Ascending aorta (tissue), 2 donors: ENCODE measurements at regions of chr1 and their contacts with region 1.

Region 1: GRCh38 chr1:248873409-248873992 is 14.6 kb upstream of the ZNF692 start:
- DNase-seq: peak; percentile 86 to 98
- H3K4me3 ChIP-seq: peak overlapping the region; percentile 70 to 79
- H3K27ac ChIP-seq: peak overlapping the region; percentile 97 to 99
- H3K4me1 ChIP-seq: no peaks in the 10 kb centered on the region
- H3K27me3 ChIP-seq: no peaks in the 10 kb centered on the region
- CTCF ChIP-seq: no peak

Region 2: GRCh38 chr1:247833601-247834000 is 1039.9 kb before region 1 on chr1:
- intact Hi-C with region 1: no loop called
- DNase-seq: no peak
- H3K4me3 ChIP-seq: no peak overlapping the region
- H3K27ac ChIP-seq: no peak overlapping the region
- H3K4me1 ChIP-seq: no peaks in the 10 kb centered on the region
- H3K27me3 ChIP-seq: no peaks in the 10 kb centered on the region
- CTCF ChIP-seq: no peak

Region 3: GRCh38 chr1:248670003-248670402 is 203.5 kb before region 1 on chr1:
- intact Hi-C with region 1: no loop called
- DNase-seq: no peak
- H3K4me3 ChIP-seq: no peak overlapping the region
- H3K27ac ChIP-seq: no peak overlapping the region
- H3K4me1 ChIP-seq: no peaks in the 10 kb centered on the region
- H3K27me3 ChIP-seq: no peaks in the 10 kb centered on the region
- CTCF ChIP-seq: no peak

Region 4: GRCh38 chr1:248825909-248826760 is 47.4 kb before region 1 on chr1 and contains the start of gene SH3BP5L:
- intact Hi-C with region 1: loop called (anchors 1 kb)
- DNase-seq: peak; percentile 68 to 95
- H3K4me3 ChIP-seq: peak within 1 kb of the TSS; percentile 80 to 90
- H3K27ac ChIP-seq: peak within 1 kb of the TSS; percentile 88 to 93
- H3K4me1 ChIP-seq: peaks cover 18 to 45% of the 10 kb centered on the region in 2 donors
- H3K27me3 ChIP-seq: no peaks in the 10 kb centered on the region
- CTCF ChIP-seq: peak; percentile 43 to 70 (median 57)
- total RNA-seq, gene SH3BP5L: 15.9 TPM

Region 5: DNA sequence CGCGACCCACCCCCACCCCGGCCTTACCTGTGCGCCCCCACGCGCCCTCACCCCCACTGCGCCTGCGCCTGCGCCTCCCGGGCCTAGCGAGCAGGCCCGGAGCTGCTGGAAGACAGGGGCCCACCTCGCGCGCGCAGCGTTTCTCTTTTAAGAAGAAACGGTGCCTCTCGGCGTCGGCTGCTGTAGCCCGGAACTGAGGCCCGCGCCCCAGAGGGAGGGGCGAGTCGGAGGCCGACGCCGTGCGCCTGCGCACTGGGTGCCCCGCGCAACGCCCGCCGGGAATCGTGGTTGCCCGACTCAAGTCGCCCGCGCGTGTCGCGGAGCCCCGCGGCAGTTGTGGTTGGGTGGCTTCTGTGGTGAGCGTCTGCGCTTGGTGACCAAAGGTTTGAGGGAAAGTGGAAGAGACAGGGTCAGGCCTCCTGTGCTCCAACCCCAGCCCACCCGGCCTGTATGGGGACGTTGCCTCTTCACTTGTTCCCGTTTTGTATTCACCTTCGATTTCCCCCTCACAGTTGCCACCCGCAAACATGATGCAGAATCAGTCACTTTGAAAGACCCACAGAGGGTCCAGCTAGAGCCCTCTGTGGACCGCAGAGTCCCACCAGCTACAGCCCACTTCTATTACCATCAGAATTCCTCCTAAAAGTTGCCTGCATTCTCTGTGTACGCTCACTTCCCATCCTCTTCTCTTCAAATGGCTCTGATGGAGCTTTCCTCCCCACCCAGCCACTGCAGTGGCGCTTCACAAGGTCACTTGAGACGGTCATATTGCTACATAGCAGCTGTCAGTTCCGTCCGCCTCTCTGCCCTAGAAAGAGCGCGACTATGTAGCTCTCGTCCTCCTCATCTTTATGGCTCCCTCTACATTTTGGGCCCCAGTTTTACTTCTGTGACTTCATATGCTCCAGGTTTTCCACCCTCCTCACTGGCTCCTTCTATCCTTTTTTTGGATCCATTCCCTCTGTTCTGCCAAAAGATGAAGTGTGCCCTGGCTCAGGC is 14.3 kb before region 1 on chr1 and contains the start of gene ZNF692:
- intact Hi-C with region 1: loop called (anchors 1 kb)
- DNase-seq: peak; percentile 86 to 99
- H3K4me3 ChIP-seq: peak within 1 kb of the TSS; percentile 69
- H3K27ac ChIP-seq: peak within 1 kb of the TSS; percentile 83 to 90
- H3K4me1 ChIP-seq: peaks cover 11 to 25% of the 10 kb centered on the region in 2 donors
- H3K27me3 ChIP-seq: no peaks in the 10 kb centered on the region
- CTCF ChIP-seq: no peak
- total RNA-seq, gene ZNF692: 13.8 TPM